ENCODE measurements at regions of chrX and their contacts with region 1.

Region 1: GRCh38 chrX:23901805-23902204 is 5.9 kb downstream of the APOO start:
- DNase-seq: peak; percentile 62 to 92
- ATAC-seq: peak; percentile 83 to 84
- H3K4me3 ChIP-seq: peak overlapping the region; percentile 22; the same call in 2 of the 3 replicates
- H3K27ac ChIP-seq: peak overlapping the region; percentile 91 to 95
- H3K4me1 ChIP-seq: peaks cover 66% of the 10 kb centered on the region
- CTCF ChIP-seq: peak; percentile 67
- EP300 ChIP-seq: no peak
- POLR2A ChIP-seq: no peak
- RAD21 ChIP-seq: peak; percentile 90 to 92

Region 2: DNA sequence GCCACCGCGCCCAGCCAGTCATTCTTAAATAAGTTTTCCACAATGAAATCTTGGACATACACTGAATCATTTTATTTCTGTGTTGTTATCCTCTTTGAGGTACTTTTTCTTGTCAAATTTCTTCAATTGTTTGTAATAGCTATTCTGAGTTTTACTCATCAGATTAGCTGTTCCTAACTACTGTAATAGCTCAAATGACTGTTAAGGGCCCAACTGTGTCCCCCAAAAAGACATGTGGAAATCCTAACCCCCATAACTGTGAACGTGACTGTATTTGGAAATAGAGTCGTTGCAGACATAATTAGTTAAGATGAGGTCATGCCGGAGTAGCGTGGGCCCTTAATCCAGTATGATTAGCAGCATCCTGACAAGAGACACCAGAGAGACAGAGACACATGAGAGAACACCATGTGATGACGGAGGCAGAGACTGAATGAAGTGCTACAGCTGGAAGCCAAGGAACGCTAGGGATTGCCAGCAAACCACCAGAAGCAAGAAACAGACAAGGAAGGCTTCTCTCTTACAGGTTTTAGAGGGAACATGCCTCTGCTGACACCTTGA is 181.6 kb before region 1 on chrX:
- CTCF ChIA-PET with region 1: interaction called, 14 read pairs
- POLR2A ChIA-PET with region 1: no interaction called
- DNase-seq: no peak
- ATAC-seq: no peak
- H3K4me3 ChIP-seq: no peak overlapping the region
- H3K27ac ChIP-seq: no peak overlapping the region
- H3K4me1 ChIP-seq: no peaks in the 10 kb centered on the region
- CTCF ChIP-seq: no peak
- EP300 ChIP-seq: no peak
- POLR2A ChIP-seq: no peak
- RAD21 ChIP-seq: no peak

Region 3: DNA sequence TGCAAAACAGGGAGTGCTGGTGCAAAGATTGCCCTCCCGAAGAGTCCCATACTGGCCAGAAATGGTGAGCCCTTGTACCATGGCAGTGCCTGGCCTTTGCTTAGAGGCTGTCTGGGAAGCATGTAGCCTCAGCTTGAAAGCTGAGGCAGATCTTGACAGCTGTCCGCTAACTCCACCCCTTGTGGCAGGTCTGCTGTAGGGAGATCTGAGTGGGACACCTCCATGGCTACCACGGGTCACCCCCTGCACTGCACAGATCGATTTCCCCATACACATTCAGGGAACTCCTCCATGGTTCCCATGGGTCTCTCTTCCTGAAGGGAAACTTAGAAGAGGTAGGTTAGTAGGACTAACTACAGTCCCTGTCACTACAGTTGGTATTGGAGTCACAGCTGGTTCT is 152.7 kb before region 1 on chrX:
- CTCF ChIA-PET with region 1: interaction called, 35 read pairs
- POLR2A ChIA-PET with region 1: no interaction called
- DNase-seq: no peak
- ATAC-seq: peak; percentile 13 to 28; a peak in 2 of 6 replicates
- H3K4me3 ChIP-seq: no peak overlapping the region
- H3K27ac ChIP-seq: no peak overlapping the region
- H3K4me1 ChIP-seq: peaks cover 11% of the 10 kb centered on the region; the same call in 2 of the 3 replicates
- CTCF ChIP-seq: no peak
- EP300 ChIP-seq: no peak
- POLR2A ChIP-seq: no peak
- RAD21 ChIP-seq: no peak

Region 4: DNA sequence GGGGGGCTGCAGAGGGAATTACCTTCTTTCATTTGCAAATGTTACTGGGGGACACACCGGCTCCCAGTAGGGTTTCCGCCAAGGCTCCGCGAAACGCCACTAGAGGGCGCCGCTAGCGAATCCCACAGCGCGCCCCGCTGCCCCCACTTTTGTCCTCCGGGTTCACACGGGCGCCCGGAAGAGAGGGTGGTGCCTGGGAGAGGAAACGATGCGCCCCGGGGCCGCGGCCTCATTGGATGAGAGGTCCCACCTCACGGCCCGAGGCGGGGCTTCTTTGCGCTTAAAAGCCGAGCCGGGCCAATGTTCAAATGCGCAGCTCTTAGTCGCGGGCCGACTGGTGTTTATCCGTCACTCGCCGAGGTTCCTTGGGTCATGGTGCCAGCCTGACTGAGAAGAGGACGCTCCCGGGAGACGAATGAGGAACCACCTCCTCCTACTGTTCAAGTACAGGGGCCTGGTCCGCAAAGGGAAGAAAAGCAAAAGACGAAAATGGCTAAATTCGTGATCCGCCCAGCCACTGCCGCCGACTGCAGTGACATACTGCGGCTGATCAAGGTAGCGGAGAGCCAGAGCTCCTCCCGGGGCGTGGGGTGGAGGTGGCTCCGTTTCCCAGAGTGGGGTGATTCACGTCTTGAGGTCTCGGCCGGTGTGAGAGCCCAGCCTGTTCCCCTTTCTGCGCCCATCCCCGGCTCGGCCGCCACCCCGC is 118.8 kb before region 1 on chrX and contains the start of gene SAT1:
- CTCF ChIA-PET with region 1: interaction called, 122 read pairs
- POLR2A ChIA-PET with region 1: interaction called, 218 read pairs
- DNase-seq: peak; percentile 71 to 97
- ATAC-seq: peak; percentile 80 to 84
- H3K4me3 ChIP-seq: peak within 1 kb of the TSS; percentile 86
- H3K27ac ChIP-seq: peak within 1 kb of the TSS; percentile 94 to 96
- H3K4me1 ChIP-seq: peaks cover 42% of the 10 kb centered on the region
- CTCF ChIP-seq: peak; percentile 80
- EP300 ChIP-seq: peak in 1 of 2 experiments; percentile 35; a peak in 1 of 5 replicates
- POLR2A ChIP-seq: peak; percentile 99
- RAD21 ChIP-seq: peak; percentile 73 to 88
- polyA plus RNA-seq, gene SAT1: 2,314 and 3,185 TPM in 2 replicates

Region 5: GRCh38 chrX:23803931-23804381 is 97.8 kb before region 1 on chrX:
- CTCF ChIA-PET with region 1: interaction called, 48 read pairs
- POLR2A ChIA-PET with region 1: interaction called, 10 read pairs
- DNase-seq: peak; percentile 70 to 96
- ATAC-seq: peak; percentile 84 to 86
- H3K4me3 ChIP-seq: peak overlapping the region; percentile 18; the same call in 1 of the 3 replicates
- H3K27ac ChIP-seq: peak overlapping the region; percentile 88 to 98
- H3K4me1 ChIP-seq: peaks cover 66% of the 10 kb centered on the region
- CTCF ChIP-seq: no peak
- EP300 ChIP-seq: peak; percentile 87 to 93; a peak in 4 of 5 replicates
- POLR2A ChIP-seq: no peak
- RAD21 ChIP-seq: no peak; a peak in 2 of 5 replicates

Region 6: GRCh38 chrX:23854945-23855344 is 46.9 kb before region 1 on chrX:
- CTCF ChIA-PET with region 1: interaction called, 14 read pairs
- POLR2A ChIA-PET with region 1: no interaction called
- DNase-seq: no peak
- ATAC-seq: no peak
- H3K4me3 ChIP-seq: no peak overlapping the region
- H3K27ac ChIP-seq: no peak overlapping the region
- H3K4me1 ChIP-seq: peaks cover 10% of the 10 kb centered on the region; the same call in 2 of the 3 replicates
- CTCF ChIP-seq: no peak
- EP300 ChIP-seq: no peak
- POLR2A ChIP-seq: no peak
- RAD21 ChIP-seq: no peak

Region 7: DNA sequence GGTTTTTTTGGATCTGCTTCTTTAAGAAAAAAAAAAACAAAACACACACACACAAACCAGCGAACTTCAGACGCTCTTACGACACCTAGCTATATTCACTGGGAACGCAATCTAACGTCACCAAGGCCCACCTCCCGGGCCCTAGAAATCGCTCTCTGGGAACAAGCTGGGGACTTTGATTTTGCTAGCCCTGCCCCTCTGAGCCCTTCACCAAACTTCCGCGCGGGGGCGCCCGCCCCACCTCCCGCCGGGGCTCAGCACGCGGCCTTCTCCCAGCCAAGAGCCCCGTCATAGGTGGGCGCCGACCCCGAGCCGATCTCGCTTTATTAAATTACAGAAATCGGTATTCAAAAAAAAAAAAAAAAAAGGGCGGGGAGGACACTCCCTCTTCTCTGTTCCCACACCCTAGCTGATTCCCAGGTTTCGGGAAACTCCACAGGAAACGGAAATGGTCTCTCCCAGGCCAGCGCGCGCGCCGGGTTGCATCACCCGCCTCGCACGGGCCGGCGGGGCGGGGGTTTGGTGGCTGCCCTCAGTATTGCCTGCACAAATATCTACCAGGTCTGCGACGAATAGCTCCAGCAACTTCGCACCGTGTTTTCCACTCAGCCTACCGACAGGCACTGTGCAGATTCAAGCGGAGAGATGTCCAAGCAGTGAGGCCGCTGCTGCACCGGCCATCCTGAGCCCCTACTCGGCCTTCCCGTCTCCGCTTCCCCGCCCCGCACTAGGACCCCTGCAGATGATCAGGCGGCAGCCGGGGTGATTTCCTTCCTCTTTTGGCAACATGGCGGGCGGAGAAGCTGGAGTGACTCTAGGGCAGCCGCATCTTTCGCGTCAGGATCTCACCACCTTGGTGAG is 152.6 kb after region 1 on chrX and contains the start of gene EIF2S3:
- CTCF ChIA-PET with region 1: interaction called, 23 read pairs
- POLR2A ChIA-PET with region 1: interaction called, 15 read pairs
- DNase-seq: peak; percentile 77 to 98
- ATAC-seq: peak; percentile 94 to 98
- H3K4me3 ChIP-seq: no peak within 1 kb of the TSS
- H3K27ac ChIP-seq: no peak within 1 kb of the TSS
- H3K4me1 ChIP-seq: peaks cover 9% of the 10 kb centered on the region; the same call in 1 of the 3 replicates
- CTCF ChIP-seq: peak; percentile 71
- EP300 ChIP-seq: no peak
- POLR2A ChIP-seq: peak; percentile 67
- RAD21 ChIP-seq: peak; percentile 41 to 46; a peak in 4 of 5 replicates
- polyA plus RNA-seq, gene EIF2S3: 214 and 219 TPM in 2 replicates

Measured in A549 (cell line).